Gastrocnemius medialis (tissue), 4 donors: ENCODE measurements at regions of chr15 and their contacts with region 1.

Region 1: DNA sequence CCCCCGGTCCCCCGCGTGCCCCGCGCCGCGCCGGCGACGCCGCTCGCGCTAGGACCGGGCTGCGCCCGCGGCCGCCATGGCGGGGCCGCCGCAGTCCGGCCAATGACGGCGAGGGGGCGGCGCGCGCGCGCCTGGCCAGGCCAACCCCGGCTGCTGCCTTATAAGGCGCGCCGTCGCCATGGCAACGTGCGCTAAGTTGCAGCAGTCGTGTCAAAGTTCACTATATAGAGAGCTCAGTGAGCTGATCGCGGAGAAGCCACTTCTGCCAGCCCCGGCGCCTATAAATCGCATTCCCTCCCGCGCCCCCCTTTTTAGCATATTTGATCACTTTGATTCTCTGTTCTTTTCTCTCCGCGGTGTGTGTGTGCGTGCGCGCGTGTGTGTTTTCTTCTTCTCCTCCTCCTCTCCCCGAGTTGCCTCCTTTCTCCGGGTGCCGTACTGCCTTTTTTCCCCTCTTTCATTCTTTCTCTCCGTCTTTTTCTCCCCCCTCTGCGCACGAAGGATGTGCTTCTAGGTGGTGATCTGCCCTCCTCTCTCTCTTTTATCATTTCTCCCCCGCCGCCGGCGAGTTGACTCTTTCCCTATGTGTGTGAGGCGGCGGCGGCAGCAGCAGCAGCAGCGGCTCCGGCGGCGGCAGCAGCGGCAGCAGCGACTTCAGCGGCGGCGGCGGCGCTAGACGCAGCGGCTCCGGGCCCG is at the start of gene NR2F2:
- DNase-seq: peak; percentile 93 to 97
- ATAC-seq: peak; percentile 73 to 75
- H3K4me3 ChIP-seq: peak within 1 kb of the TSS; percentile 86 to 94 (median 87)
- H3K27ac ChIP-seq: peak within 1 kb of the TSS; percentile 93 to 98 (median 97)
- H3K4me1 ChIP-seq: peaks cover 13 to 16% of the 10 kb centered on the region in 2 donors
- H3K27me3 ChIP-seq: peaks cover 0 to 11% (median 2%) of the 10 kb centered on the region in 3 donors
- CTCF ChIP-seq: peak in 1 of 5 experiments; percentile 5
- POLR2A ChIP-seq: peak; percentile 95 to 96
- total RNA-seq, gene NR2F2: 4.3 to 14.6 (median 9.3) TPM

Region 2: GRCh38 chr15:95259513-95259912 is 1071.1 kb before region 1 on chr15:
- in situ Hi-C with region 1: loop called in 1 of 4 experiments (anchors 25 kb)
- intact Hi-C with region 1: no loop called
- DNase-seq: peak; percentile 31 to 32
- ATAC-seq: peak; percentile 66 to 69
- H3K4me3 ChIP-seq: no peak overlapping the region
- H3K27ac ChIP-seq: peak overlapping the region in 2 of 4 donors; percentile 38 to 46
- H3K4me1 ChIP-seq: no peaks in the 10 kb centered on the region
- H3K27me3 ChIP-seq: no peaks in the 10 kb centered on the region
- CTCF ChIP-seq: peak; percentile 43 to 75 (median 69)
- POLR2A ChIP-seq: no peak

Region 3: GRCh38 chr15:96181873-96182301 is 148.7 kb before region 1 on chr15:
- in situ Hi-C with region 1: no loop called
- intact Hi-C with region 1: loop called (anchors 10 kb)
- DNase-seq: peak; percentile 22 to 58
- ATAC-seq: peak; percentile 91 to 97
- H3K4me3 ChIP-seq: peak overlapping the region in 3 of 4 donors; percentile 12 to 40 (median 39)
- H3K27ac ChIP-seq: peak overlapping the region in 3 of 4 donors; percentile 34 to 73 (median 40)
- H3K4me1 ChIP-seq: peaks cover 0 to 7% of the 10 kb centered on the region in 2 donors
- H3K27me3 ChIP-seq: no peaks in the 10 kb centered on the region
- CTCF ChIP-seq: no peak
- POLR2A ChIP-seq: no peak

Region 4: DNA sequence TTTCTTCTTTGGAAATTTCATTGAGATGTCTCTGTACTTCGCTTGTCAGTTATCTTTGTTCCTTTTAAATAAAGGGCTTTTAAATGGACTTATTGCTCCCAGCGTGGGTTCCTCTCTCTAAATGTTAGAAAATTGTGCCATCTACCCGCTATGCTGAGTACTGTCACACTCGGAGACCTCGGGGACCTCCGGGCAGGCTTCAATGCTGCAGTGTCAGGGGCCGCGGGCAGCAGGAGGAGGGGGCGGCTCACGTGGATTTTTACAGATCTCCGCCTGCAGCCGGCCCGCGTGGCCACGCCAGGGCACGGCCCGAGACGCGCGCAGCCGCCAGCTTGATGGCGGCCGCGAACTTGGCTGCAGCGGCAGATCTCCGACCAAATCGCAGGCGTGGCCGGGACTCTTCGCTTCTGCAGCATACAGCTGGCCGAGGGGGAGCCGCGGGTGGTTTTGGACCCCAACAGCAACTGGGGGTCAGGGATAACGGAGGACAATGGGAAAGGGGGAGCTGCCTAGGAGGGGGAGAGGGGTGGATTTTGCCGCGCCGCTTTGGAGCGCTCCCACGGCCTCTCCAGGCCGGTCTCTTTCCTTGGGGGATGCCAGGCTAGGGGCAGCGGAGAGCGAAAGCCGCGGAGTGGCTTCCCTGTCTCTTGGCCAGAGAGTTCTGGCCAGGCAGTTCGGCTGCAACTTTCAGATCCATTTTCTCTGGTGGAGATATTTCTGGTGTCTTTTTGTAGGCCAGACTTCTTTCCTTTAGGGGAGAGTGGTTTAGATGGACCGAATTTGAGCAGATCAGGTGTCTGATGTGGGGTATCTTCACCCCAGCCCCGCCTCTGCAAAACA is 15.2 kb after region 1 on chr15:
- in situ Hi-C with region 1: no loop called
- intact Hi-C with region 1: loop called (anchors 1 kb)
- DNase-seq: peak; percentile 67 to 78
- ATAC-seq: peak; percentile 86 to 87
- H3K4me3 ChIP-seq: peak overlapping the region; percentile 62 to 76 (median 67)
- H3K27ac ChIP-seq: peak overlapping the region; percentile 93 to 98 (median 95)
- H3K4me1 ChIP-seq: peaks cover 0 to 19% of the 10 kb centered on the region in 2 donors
- H3K27me3 ChIP-seq: no peaks in the 10 kb centered on the region
- CTCF ChIP-seq: peak; percentile 51 to 80 (median 74)
- POLR2A ChIP-seq: peak; percentile 19 to 40

Region 5: GRCh38 chr15:96409215-96410138 is 78.9 kb after region 1 on chr15:
- in situ Hi-C with region 1: no loop called
- intact Hi-C with region 1: no loop called
- DNase-seq: no peak
- ATAC-seq: peak in 1 of 2 donors; percentile 36
- H3K4me3 ChIP-seq: peak overlapping the region; percentile 38 to 61 (median 44)
- H3K27ac ChIP-seq: no peak overlapping the region
- H3K4me1 ChIP-seq: peaks cover 7 to 8% of the 10 kb centered on the region in 2 donors
- H3K27me3 ChIP-seq: peaks cover 71 to 81% (median 74%) of the 10 kb centered on the region in 3 donors
- CTCF ChIP-seq: no peak
- POLR2A ChIP-seq: no peak

Region 6: GRCh38 chr15:97521381-97522285 is 1191.0 kb after region 1 on chr15:
- in situ Hi-C with region 1: no loop called
- intact Hi-C with region 1: loop called (anchors 5 kb)
- DNase-seq: peak; percentile 25 to 63
- ATAC-seq: peak; percentile 70 to 72
- H3K4me3 ChIP-seq: peak overlapping the region; percentile 36 to 51 (median 47)
- H3K27ac ChIP-seq: peak overlapping the region; percentile 64 to 71 (median 69)
- H3K4me1 ChIP-seq: peaks cover 10 to 12% of the 10 kb centered on the region in 2 donors
- H3K27me3 ChIP-seq: no peaks in the 10 kb centered on the region
- CTCF ChIP-seq: no peak
- POLR2A ChIP-seq: peak in 1 of 2 donors; percentile 15